PC-9 (cell line): ENCODE measurements at regions of chr15 and their contacts with region 1.

Region 1: GRCh38 chr15:96261575-96262034 is 68.9 kb upstream of the NR2F2 start:
- DNase-seq: no peak
- H3K4me3 ChIP-seq: no peak overlapping the region
- H3K27ac ChIP-seq: no peak overlapping the region
- H3K4me1 ChIP-seq: peaks cover 33% of the 10 kb centered on the region
- H3K27me3 ChIP-seq: no peaks in the 10 kb centered on the region
- CTCF ChIP-seq: no peak

Region 2: DNA sequence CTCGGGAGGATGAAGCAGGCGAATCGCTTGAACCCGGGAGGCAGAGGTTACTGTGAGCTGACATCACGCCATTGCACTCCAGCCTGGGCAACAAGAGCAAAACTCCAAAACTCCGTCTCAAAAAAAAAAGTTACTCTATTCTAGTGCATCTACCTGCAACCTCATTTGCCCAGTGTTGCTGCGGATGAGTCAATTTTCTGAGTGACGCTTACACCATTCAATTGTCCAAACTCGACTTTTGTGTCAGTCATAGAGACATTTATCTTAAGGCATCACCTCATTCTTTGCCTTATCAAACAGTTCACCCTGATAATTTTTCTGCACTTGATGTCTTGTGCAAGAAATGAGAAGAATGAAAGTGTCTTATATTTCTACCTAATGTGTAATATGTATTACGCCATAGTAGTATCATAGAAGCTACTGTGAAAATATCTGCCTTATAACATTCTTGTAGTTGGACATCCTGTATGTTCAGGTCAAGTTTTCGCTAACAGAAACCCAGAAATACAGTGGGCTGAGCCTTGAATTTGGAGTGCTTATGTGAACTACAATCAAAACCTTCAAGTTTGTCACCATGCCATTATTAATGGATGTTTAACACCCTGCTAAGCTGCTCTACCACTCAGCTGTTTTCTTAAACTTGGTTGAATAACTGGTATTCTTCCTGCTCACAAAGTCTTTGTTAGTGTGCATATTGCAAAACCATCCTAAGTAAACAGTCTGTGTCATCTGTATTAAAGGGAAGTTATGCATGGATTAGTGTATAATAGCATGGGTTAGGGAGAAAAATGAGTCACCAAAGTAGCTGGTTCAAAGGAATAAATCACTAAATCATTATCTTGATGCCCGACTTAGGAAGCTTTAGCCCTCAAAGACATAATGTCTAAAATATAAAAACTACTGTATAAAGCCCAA is 462.1 kb before region 1 on chr15:
- CTCF ChIA-PET with region 1: no interaction called
- POLR2A ChIA-PET with region 1: no interaction called
- intact Hi-C with region 1: loop called (anchors 10 kb)
- DNase-seq: peak; percentile 19 to 97
- H3K4me3 ChIP-seq: no peak overlapping the region
- H3K27ac ChIP-seq: peak overlapping the region; percentile 66
- H3K4me1 ChIP-seq: peaks cover 20% of the 10 kb centered on the region
- H3K27me3 ChIP-seq: no peaks in the 10 kb centered on the region
- CTCF ChIP-seq: no peak

Region 3: DNA sequence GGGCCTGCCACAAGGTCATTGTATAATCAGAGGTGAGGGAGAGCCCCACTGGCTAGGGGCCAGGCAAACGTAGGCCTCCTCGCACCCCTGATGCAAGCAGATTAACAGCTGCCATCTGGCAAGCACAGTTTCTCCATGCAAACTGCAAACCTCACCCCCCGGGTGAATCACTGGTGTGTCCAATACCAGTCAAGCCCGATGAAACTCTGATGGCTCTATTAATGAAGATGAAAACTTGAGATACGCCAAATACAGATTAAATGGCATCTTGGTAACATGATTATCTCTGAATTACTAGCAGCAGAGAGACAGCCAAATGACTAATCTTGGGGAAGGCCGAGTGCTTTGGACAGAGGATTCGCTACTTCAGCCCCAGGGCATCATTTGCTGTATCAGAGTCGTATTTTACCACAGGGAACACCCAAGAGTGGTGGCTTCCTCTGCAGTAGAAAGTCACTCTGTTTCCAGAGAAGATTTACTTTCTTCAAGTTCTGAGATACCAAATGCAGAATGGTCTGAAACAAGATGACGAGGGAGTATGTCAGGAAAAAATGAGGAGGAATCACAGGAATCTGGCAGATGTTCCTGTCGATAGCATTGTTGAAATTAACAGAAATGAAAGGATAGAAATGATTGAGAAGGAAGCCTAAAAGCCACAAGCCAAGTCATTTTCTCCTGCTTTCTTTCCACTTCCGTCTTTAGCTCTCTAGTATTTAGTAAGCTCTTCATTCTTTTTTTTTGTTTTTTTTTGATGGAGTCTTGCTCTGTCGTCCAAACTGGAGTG is 27.3 kb before region 1 on chr15:
- CTCF ChIA-PET with region 1: no interaction called
- POLR2A ChIA-PET with region 1: interaction called, 3 read pairs
- intact Hi-C with region 1: loop called (anchors 2 kb)
- DNase-seq: peak in 1 of 2 experiments; percentile 42
- H3K4me3 ChIP-seq: no peak overlapping the region
- H3K27ac ChIP-seq: no peak overlapping the region
- H3K4me1 ChIP-seq: peaks cover 11% of the 10 kb centered on the region
- H3K27me3 ChIP-seq: no peaks in the 10 kb centered on the region
- CTCF ChIP-seq: no peak